ENCODE measurements at regions of chr11 and their contacts with region 1.

Region 1: GRCh38 chr11:34926101-34926830 is 9.8 kb downstream of the PDHX start:
- DNase-seq: peak; percentile 67
- H3K4me3 ChIP-seq: no peak overlapping the region
- H3K27ac ChIP-seq: no peak overlapping the region
- H3K4me1 ChIP-seq: peaks cover 5% of the 10 kb centered on the region
- H3K27me3 ChIP-seq: no peaks in the 10 kb centered on the region
- CTCF ChIP-seq: peak; percentile 34 to 46
- POLR2A ChIP-seq: no peak

Region 2: GRCh38 chr11:33128739-33129138 is 1797.5 kb before region 1 on chr11:
- CTCF ChIA-PET with region 1: no interaction called
- POLR2A ChIA-PET with region 1: no interaction called
- dilution Hi-C with region 1: no loop called
- intact Hi-C with region 1: no loop called
- DNase-seq: no peak
- H3K4me3 ChIP-seq: no peak overlapping the region
- H3K27ac ChIP-seq: no peak overlapping the region
- H3K4me1 ChIP-seq: no peaks in the 10 kb centered on the region
- H3K27me3 ChIP-seq: no peaks in the 10 kb centered on the region
- CTCF ChIP-seq: no peak
- POLR2A ChIP-seq: no peak

Region 3: DNA sequence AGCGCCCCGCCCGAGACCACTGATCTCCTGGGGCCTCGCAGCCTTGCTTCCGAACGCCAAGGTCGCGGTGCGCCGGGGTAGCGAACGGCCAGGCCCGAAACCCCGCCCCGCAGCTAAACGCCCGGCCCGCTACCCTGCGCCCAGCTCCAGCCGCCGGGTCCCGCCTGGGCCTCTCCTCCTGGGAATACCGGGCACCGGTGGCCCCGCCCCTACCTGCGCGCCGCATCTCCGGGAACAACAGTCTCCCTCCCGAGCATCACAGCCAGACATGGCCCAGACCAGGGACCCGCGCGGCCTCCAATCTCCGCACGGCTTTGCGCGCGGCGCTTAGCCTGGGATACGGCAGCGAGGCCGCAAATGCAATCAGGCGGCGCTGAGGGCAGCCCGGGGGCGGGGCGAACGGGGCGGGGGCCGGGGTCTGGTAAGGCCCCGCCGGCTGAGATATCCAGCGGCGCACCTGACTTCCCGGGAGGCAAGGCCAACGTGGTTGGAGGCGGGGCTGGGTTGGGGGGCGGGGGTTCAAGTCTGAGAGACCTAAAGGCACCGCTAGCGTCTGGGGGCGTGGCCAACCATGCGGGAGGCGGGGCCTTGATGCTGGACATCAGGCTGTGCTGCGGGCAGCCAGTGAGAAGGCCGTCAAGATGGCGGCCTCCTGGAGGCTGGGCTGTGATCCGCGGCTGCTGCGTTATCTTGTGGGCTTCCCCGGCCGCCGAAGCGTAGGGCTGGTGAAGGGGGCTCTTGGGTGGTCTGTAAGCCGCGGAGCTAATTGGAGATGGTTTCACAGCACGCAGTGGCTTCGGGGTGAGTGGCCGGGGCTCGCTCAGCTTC is 10.0 kb before region 1 on chr11 and contains the starts of genes APIP and PDHX:
- CTCF ChIA-PET with region 1: interaction called, 10 read pairs
- POLR2A ChIA-PET with region 1: interaction called, 5 read pairs
- dilution Hi-C with region 1: no loop called
- intact Hi-C with region 1: no loop called
- DNase-seq: peak; percentile 98
- H3K4me3 ChIP-seq: peak within 1 kb of the TSS; percentile 67 to 89 (median 80)
- H3K27ac ChIP-seq: peak within 1 kb of the TSS; percentile 88
- H3K4me1 ChIP-seq: peaks cover 15% of the 10 kb centered on the region
- H3K27me3 ChIP-seq: no peaks in the 10 kb centered on the region
- CTCF ChIP-seq: no peak
- POLR2A ChIP-seq: peak; percentile 98
- total RNA-seq, gene APIP: 25.9 and 26.9 TPM in 2 replicates
- total RNA-seq, gene PDHX: 30.5 and 33.2 TPM in 2 replicates

Region 4: GRCh38 chr11:35138943-35139721 is 212.9 kb after region 1 on chr11 and contains the start of gene CD44:
- CTCF ChIA-PET with region 1: interaction called, 10 read pairs
- POLR2A ChIA-PET with region 1: no interaction called
- dilution Hi-C with region 1: no loop called
- intact Hi-C with region 1: loop called (anchors 5 kb)
- DNase-seq: peak; percentile 44
- H3K4me3 ChIP-seq: peak within 1 kb of the TSS; percentile 53 to 64 (median 57)
- H3K27ac ChIP-seq: peak within 1 kb of the TSS; percentile 18
- H3K4me1 ChIP-seq: peaks cover 23% of the 10 kb centered on the region
- H3K27me3 ChIP-seq: peaks cover 0 to 15% of the 10 kb centered on the region in 2 experiments
- CTCF ChIP-seq: no peak
- POLR2A ChIP-seq: peak; percentile 48
- total RNA-seq, gene CD44: 26.3 and 68.3 TPM in 2 replicates

Region 5: DNA sequence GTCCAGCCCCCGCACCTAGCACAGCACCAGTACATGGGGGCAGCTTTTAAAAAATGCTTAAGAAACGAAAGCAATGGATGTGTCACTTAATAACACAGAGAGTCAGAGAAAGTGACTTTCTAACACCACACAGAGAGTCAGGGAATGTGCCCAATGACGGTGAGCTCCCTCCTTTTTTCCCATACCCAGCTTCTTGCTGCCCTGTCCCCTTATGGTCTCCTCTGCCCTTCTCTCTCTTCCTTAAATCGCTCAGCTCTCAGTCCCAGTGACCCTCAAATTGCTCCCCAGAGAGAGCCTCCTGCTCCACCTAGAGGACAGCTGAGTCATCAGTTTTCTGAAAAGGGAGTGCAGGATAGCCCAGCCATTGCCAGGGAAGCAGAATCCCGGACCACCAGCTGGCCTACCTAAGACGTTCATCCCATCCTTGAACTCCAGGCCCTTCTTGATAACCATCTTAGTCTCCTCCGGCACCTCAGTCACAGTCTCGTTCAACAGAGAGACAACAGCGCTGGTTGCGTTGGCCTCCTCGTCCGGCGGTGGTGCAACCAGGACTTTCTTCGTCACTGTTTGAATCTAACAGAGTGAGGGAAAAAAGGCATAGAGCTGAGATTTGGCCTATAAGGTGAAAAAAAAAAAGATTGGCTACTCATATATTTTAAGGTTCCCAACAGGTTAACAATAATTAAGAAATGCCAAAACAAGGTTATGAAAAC is 379.6 kb after region 1 on chr11:
- CTCF ChIA-PET with region 1: interaction called, 30 read pairs
- POLR2A ChIA-PET with region 1: no interaction called
- dilution Hi-C with region 1: no loop called
- intact Hi-C with region 1: no loop called
- DNase-seq: peak; percentile 17
- H3K4me3 ChIP-seq: no peak overlapping the region
- H3K27ac ChIP-seq: no peak overlapping the region
- H3K4me1 ChIP-seq: no peaks in the 10 kb centered on the region
- H3K27me3 ChIP-seq: no peaks in the 10 kb centered on the region
- CTCF ChIP-seq: peak in 1 of 2 donors; percentile 5
- POLR2A ChIP-seq: no peak

Region 6: DNA sequence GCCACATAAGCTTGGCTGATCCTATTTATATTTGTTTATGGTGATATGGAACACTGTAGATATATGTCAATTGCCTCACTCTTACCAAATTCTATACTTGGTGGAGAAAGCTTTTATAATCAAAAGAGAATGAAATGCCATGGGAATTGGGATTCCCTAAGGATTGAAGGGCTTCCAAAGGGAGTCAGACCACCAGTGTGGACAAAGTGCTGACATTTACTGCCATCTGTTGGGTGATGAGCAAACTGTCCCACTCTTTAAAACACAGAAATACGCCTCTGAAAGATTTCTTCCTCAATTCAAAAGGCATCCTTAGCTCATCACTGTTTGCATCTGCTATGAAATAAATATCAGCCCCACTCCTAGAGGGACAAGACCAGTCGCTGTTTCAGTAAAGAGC is 486.0 kb after region 1 on chr11:
- CTCF ChIA-PET with region 1: interaction called, 13 read pairs
- POLR2A ChIA-PET with region 1: no interaction called
- dilution Hi-C with region 1: no loop called
- intact Hi-C with region 1: no loop called
- DNase-seq: peak; percentile 4
- H3K4me3 ChIP-seq: no peak overlapping the region
- H3K27ac ChIP-seq: no peak overlapping the region
- H3K4me1 ChIP-seq: no peaks in the 10 kb centered on the region
- H3K27me3 ChIP-seq: peaks cover 18 to 42% of the 10 kb centered on the region in 2 experiments
- CTCF ChIP-seq: peak; percentile 9 to 34
- POLR2A ChIP-seq: no peak

Measured in endothelial cell of umbilical vein (primary cell).